Calu3 (cell line): ENCODE measurements at regions of chrX and their contacts with region 1.

Region 1: DNA sequence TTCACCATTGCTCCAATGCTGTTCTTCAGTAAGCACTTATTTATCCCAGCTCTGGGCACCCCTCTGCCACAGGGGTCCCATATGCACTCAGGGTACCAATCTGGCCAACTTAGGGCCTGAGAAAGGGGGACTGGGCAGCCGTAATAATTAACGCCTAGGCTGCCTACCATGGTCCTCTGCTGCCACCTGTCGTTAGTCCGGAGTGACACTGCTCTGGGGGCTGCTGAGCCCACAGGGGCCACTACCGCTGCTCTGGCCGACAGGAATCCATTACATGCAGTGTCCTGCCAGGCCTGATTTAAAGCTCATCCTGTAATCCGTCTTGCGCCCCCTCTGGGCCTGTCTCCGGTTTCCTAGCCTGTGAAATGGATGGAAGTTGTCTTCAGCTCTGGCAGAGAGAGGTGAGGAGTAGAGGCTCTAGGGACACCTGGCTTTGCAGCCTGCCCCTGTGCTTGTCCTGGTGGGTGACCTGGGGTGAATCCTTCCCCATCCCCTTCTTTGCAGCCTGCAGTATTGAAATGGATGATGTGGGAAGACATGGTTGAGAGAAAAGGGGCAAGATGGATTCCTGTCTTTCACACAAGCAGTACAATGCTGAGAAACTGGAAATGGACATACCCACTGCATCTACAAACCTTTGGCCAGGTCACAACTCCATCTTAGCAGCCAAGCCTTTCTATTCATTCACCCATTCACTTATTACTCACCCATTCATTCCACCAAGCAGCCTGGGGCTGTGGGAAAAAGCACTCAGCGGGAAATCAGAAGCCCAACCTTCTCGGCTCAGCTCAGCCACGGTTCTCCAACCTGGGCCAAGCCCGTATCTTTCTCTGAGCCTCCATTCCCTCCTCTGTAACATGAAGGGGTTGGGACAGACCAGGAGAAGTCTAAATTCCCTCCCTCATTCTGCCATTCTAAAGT is 116.3 kb upstream of the NALF2 start:
- DNase-seq: peak; percentile 66
- H3K4me3 Mint-ChIP-seq: no peak overlapping the region
- H3K27ac Mint-ChIP-seq: no peak overlapping the region
- H3K4me1 Mint-ChIP-seq: no peaks in the 10 kb centered on the region
- H3K27me3 Mint-ChIP-seq: peaks cover 99% of the 10 kb centered on the region
- CTCF ChIP-seq: peak; percentile 53

Region 2: GRCh38 chrX:68732906-68733493 is 654.8 kb before region 1 on chrX:
- CTCF ChIA-PET with region 1: interaction called, 3 read pairs
- intact Hi-C with region 1: loop called (anchors 5 kb)
- DNase-seq: peak; percentile 78
- H3K4me3 Mint-ChIP-seq: no peak overlapping the region
- H3K27ac Mint-ChIP-seq: no peak overlapping the region
- H3K4me1 Mint-ChIP-seq: no peaks in the 10 kb centered on the region
- H3K27me3 Mint-ChIP-seq: peaks cover 66% of the 10 kb centered on the region
- CTCF ChIP-seq: peak; percentile 59

Region 3: DNA sequence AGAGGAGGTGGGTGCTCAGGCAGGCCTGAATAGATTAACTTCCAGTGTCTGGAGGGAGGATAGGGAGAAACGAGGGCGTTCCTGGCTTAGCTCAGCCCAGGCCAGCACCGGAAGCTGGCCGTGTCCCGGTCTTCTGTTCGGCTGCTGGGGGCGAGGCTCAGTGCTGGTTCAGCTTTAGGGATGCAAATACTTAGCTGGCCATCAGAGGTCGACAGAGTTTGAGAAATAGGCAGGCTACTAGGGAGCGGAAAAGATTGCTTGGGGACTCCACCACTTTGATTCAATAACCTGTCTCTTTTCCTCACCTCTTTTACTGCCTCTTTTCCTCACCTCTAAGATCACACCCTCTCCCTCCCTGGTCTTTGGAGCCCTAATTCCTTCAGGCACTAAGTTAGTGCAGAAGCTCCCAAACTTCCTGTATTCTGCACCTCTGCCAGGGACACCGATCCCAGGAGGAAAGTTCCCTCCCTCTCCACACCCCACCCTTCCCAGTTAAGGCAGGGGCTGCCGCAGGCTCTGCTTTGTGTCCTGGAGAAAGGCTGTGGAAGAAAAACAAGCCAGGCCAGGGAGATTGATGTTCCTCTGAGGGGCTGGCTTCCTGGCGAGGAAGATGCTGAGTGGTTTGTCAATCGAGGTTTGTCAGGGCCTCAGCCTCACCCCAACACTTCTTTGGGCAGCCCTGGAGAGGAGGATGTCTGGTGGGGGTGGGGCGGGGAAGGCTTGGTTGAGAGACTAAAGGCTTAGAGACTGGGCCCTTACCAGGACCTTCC is 565.0 kb before region 1 on chrX:
- CTCF ChIA-PET with region 1: interaction called, 16 read pairs
- intact Hi-C with region 1: loop called (anchors 1 kb)
- DNase-seq: peak; percentile 46
- H3K4me3 Mint-ChIP-seq: no peak overlapping the region
- H3K27ac Mint-ChIP-seq: no peak overlapping the region
- H3K4me1 Mint-ChIP-seq: peaks cover 4% of the 10 kb centered on the region
- H3K27me3 Mint-ChIP-seq: peaks cover 24% of the 10 kb centered on the region
- CTCF ChIP-seq: peak; percentile 29

Region 4: DNA sequence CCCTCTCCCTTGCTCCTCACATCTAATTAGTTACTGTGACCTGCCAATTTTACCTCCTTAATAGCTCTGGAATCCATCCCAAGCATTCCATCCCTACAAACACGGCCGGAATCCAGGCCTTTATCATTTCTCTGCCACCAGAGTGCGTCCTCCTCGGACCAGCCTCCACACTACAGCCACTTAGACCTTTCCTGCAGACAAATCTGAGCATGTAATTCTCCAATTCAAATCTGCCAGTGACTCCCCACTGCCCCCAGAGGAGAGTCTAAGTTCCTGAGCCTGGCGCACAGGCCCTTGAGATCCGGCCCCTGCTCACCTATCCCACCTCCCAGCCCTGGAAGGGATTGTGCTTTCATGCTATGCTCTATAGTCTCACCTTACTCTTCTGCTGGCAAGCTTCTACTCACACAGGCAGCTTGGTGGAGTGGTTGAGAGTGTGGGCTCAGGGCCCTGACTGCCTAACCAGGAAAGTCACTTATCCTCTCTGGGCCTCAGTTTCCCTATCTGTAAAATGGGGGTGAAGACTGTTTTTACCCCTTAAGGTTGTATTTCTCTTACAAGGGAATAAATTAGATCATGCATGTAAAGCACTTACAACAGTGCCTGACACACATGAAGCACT is 253.8 kb before region 1 on chrX:
- CTCF ChIA-PET with region 1: no interaction called
- intact Hi-C with region 1: loop called (anchors 1 kb)
- DNase-seq: peak; percentile 70
- H3K4me3 Mint-ChIP-seq: no peak overlapping the region
- H3K27ac Mint-ChIP-seq: no peak overlapping the region
- H3K4me1 Mint-ChIP-seq: peaks cover 14% of the 10 kb centered on the region
- H3K27me3 Mint-ChIP-seq: peaks cover 16% of the 10 kb centered on the region
- CTCF ChIP-seq: peak; percentile 51

Region 5: DNA sequence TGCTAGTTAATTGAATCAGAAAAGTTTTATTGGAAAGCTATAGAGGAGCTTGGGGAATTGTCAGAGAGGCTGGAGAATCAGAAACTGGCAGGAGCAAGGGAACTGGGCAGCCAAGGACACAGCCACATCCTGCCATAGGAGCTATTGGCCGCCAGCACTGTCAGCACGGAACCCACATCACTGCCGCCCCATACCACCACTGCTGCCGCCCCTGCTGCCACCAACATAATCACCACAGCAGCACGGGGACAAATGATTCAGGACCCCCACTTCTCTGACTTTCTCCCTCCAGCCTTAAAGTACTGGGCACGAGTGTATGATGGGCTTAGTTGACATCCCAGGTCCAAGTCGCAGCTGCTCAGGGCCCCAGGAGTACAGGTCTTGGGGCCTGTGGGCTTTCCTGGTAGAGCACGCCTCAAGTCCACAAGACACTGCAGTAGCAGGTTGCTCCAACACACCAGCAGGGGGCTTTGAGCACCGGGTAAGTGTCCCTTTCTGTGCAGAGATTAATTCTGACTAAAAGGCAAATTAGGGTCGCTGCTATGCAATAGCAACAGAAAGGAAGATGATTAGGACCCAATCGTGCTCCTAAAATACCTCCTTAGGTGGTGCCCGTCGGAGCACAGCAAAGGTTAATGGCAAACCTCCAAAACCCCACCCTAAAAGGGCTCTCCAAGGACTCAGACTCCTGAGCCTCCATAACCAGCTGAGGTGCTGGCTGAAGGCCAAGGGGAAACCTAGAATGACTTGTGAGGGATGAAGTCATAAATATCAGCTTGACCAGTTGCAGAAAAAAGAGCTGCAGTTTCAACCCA is 229.5 kb before region 1 on chrX:
- CTCF ChIA-PET with region 1: interaction called, 3 read pairs
- intact Hi-C with region 1: loop called (anchors 5 kb)
- DNase-seq: peak; percentile 74
- H3K4me3 Mint-ChIP-seq: no peak overlapping the region
- H3K27ac Mint-ChIP-seq: no peak overlapping the region
- H3K4me1 Mint-ChIP-seq: peaks cover 31% of the 10 kb centered on the region
- H3K27me3 Mint-ChIP-seq: no peaks in the 10 kb centered on the region
- CTCF ChIP-seq: peak; percentile 58

Region 6: GRCh38 chrX:69285881-69286564 is 101.8 kb before region 1 on chrX:
- CTCF ChIA-PET with region 1: interaction called, 5 read pairs
- intact Hi-C with region 1: loop called (anchors 5 kb)
- DNase-seq: peak; percentile 76
- H3K4me3 Mint-ChIP-seq: peak overlapping the region; percentile 26
- H3K27ac Mint-ChIP-seq: no peak overlapping the region
- H3K4me1 Mint-ChIP-seq: peaks cover 4% of the 10 kb centered on the region
- H3K27me3 Mint-ChIP-seq: peaks cover 8% of the 10 kb centered on the region
- CTCF ChIP-seq: peak; percentile 87